ENCODE measurements at regions of chr12 and their contacts with region 1.

Region 1: DNA sequence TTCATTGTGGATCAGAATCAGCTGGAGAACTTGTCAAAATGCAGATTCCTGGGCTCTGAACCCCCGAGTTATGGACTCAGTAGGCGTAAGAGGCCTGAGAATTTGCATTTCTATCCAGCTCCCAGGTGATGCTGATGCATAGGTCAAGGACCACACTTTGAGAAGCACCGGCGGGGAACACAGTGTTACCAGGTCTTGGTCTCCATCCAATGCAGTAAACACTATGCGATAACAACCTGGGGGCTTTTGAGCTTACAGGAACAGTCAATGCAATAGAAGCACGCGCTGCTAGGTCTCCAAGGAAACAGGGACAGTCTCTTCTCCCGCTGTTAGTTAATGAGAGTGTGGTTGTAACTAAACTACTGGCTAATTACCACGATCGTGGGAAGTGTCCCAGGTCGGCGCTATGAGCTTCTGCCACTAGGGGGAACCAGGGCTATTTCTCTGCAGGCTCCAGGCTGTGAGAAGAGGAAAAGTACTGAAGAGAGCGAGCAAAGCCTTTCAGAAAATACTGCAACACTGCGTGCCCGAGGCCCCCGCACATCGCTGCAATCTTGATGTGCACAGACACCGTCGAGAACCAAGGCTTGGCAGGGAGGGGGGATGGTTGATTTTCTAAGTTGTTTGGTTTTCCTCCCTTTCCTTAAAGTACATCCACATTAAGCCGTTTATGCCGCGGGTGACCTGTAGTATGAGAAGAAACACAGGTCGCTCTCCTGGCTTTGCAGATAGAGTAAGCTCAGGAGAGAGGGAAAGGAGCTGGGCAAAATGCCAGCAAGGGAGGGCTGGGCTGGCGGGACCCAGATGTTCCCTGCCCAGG is 52.0 kb upstream of the KCNA1 start:
- DNase-seq: peak; percentile 79
- CTCF ChIP-seq: peak; percentile 94

Region 2: DNA sequence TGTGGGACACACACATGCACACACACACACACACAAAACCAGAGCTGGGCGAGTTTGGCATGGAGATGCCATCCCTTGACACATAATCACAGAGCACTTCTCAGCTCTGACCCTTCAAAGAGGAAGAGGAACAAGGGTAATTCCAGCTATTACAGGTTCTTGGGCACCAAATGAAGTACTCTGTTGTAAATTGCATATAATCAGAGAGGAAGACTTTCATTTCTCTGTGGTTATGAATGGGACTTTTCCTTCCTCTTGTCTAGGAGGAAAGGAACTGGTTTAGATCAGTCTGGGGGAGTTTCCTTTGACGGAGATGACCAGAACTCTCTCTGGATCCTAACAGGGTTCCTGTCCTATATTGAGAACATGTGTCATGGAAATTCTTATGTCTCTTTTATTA is 385.6 kb before region 1 on chr12:
- CTCF ChIA-PET with region 1: no interaction called
- POLR2A ChIA-PET with region 1: no interaction called
- DNase-seq: no peak
- CTCF ChIP-seq: no peak

Region 3: GRCh38 chr12:4780641-4781625 is 76.7 kb before region 1 on chr12:
- CTCF ChIA-PET with region 1: no interaction called
- POLR2A ChIA-PET with region 1: no interaction called
- DNase-seq: no peak
- CTCF ChIP-seq: no peak

Region 4: DNA sequence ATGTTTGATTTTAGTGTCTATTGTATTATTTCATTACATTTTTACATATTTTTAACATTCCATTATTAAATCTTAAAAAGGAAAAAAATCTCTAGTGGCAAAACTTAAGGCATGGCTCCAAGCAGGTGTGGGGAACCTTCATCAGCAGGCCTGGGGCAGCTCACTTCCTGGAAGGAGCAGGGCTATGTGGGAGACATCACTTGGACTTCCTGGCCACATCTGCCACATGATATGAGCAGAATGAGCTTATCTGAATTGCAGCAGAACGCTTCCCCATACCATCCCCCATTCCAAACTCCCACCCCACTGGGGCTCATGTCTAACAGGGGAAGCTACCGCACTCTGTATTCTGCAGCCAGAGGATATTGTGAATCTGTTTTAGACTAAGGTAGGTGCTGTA is 17.0 kb after region 1 on chr12:
- CTCF ChIA-PET with region 1: interaction called, 99 read pairs
- POLR2A ChIA-PET with region 1: no interaction called
- DNase-seq: no peak
- CTCF ChIP-seq: no peak

Region 5: GRCh38 chr12:4908684-4909409 is 51.2 kb after region 1 on chr12:
- CTCF ChIA-PET with region 1: interaction called, 119 read pairs
- POLR2A ChIA-PET with region 1: interaction called, 3 read pairs
- DNase-seq: peak; percentile 58
- CTCF ChIP-seq: peak; percentile 47

Region 6: DNA sequence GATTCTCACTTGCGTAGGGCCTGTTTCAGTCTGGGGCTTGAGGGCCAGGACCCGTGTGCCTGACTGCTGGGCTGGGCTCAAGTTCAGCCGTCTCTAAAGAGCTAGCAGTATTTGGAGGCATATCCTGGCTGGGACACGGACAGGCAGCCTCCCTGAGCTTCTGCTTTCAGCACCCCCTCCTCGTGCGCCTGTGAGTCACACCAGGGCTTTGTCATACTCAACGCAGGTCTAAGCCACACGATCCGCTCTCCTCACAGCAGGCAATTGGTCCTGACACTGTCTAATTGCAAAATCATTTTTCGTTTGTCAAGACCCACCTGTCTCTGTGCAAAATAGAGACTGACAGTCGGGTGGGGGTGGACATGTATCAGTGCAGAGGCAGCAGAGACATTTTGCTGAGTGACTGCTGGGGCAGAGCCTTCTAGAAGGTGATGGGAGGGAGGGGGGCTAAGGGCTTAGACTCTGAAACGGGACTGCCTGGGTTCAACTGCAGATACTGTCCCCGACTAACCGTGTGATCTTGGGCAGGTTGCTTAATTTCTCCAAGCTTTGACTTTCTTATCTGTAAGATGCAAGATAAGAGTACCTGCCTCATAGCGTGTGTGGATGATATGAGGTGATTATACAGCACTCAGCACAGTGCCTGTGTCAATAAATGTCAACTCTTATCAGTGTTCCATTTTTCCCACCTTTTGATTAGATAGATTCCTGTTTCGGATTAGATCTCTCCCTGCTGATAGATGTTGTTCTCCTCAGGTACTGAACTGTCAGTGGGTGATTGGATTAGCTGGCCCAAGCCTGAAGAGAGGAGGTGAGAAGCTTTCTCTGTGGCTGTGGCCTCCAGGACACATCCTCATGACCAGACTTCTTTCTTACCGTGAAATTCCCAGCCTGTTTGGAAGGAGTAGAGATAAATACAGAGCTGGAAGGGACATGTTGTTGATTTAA is 105.1 kb after region 1 on chr12:
- CTCF ChIA-PET with region 1: interaction called, 56 read pairs
- POLR2A ChIA-PET with region 1: no interaction called
- DNase-seq: no peak
- CTCF ChIP-seq: no peak

Region 7: DNA sequence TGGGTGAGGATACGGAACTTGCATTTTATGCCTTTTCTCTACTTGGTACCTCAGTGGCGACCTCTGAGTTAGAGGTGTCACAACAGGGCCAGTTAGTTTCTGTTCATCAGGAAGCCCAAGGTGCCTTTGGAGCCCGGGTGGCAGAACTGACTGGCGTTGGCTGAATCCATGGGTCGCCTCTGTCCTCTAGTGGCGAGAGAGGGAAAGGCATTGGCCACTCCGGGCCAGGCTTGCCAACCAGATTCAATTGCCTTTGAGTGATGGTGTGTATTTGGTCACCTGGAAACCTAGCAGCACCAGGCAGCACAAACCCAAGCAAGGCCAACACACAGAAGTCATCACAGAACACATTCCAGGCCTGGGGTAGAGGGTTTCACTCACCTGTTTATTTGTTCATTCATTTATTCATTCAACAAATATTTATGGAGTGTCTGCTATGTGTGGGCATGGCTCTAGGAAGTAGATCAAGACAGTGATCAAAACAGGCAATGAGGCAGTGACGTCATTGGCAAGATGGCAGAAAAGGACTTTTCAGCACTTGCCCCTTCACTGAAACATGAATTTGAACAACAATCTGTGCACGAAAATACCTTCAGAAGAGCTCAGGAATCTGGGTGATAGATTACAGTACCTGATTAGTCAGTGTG is 145.5 kb after region 1 on chr12:
- CTCF ChIA-PET with region 1: interaction called, 198 read pairs
- POLR2A ChIA-PET with region 1: no interaction called
- DNase-seq: peak; percentile 71
- CTCF ChIP-seq: peak; percentile 99

Region 8: GRCh38 chr12:5073853-5074252 is 216.2 kb after region 1 on chr12:
- CTCF ChIA-PET with region 1: interaction called, 18 read pairs
- POLR2A ChIA-PET with region 1: no interaction called
- DNase-seq: no peak
- CTCF ChIP-seq: no peak

Region 9: DNA sequence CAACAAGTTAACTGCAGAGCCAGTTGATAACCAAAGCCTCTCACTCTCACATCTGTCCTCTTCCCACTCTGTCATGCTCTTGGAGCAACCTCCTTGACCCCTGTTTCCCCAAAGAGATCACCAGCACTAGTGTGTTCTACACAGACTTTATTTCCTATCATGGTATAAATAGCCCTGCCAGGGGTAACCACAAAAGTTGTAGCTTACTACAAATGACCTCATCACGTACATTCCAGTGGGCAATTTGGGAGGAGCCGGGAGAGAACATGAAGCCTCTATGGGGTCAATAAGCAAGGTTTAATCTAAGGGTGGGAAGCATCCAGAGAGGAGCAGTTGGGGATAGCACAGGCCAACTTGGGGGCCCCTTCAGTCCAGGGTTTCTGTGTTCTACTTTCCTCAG is 372.5 kb after region 1 on chr12:
- CTCF ChIA-PET with region 1: no interaction called
- POLR2A ChIA-PET with region 1: no interaction called
- DNase-seq: no peak
- CTCF ChIP-seq: no peak

Measured in GM10248 (cell line).